Activated B cell treated with CpG ODN at 0.5 μM for 24 hours (primary cell): ENCODE measurements at regions of chr1 and their contacts with region 1.

Region 1: GRCh38 chr1:155352631-155353030 is 31.9 kb downstream of the RUSC1 start:
- DNase-seq: no peak
- ATAC-seq: no peak
- H3K4me3 Mint-ChIP-seq: no peak overlapping the region
- H3K27ac Mint-ChIP-seq: no peak overlapping the region
- H3K4me1 Mint-ChIP-seq: no peaks in the 10 kb centered on the region
- H3K27me3 Mint-ChIP-seq: no peaks in the 10 kb centered on the region
- CTCF ChIP-seq: no peak

Region 2: DNA sequence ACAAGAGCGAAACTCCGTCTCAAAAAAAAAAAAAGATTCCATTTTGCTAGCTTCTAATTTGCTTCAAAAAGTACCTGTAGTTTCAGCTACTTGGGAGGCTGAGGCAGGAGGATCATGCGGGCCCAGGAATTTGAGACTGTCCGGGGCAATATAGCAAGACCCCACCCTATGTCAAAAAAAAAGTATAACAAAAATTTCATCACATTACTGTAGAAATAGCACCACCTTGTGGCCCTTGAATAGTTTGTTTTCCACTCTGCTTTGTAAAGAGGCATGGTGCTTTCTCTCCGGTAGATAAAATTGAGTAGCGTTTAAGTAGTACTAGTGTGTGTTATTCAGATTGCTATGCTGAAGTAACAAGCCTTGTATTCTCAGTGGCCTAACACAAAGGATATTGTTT is 239.1 kb after region 1 on chr1:
- CTCF ChIA-PET with region 1: no interaction called
- POLR2A ChIA-PET with region 1: no interaction called
- intact Hi-C with region 1: loop called (anchors 10 kb)
- DNase-seq: no peak
- ATAC-seq: peak; percentile 58
- H3K4me3 Mint-ChIP-seq: no peak overlapping the region
- H3K27ac Mint-ChIP-seq: no peak overlapping the region
- H3K4me1 Mint-ChIP-seq: peaks cover 3% of the 10 kb centered on the region
- H3K27me3 Mint-ChIP-seq: no peaks in the 10 kb centered on the region
- CTCF ChIP-seq: no peak